Natural killer cell (primary cell): ENCODE measurements at regions of chr20 and their contacts with region 1.

Region 1: GRCh38 chr20:45934586-45935415 is at the start of gene PCIF1:
- DNase-seq: peak; percentile 98 to 100
- ATAC-seq: peak; percentile 77 to 91 (median 84)
- H3K4me3 ChIP-seq: peak within 1 kb of the TSS; percentile 99
- H3K4me3 Mint-ChIP-seq: peak within 1 kb of the TSS; percentile 96
- H3K27ac ChIP-seq: peak within 1 kb of the TSS; percentile 98
- H3K27ac Mint-ChIP-seq: peak within 1 kb of the TSS; percentile 96 to 97
- H3K4me1 ChIP-seq: peaks cover 26% of the 10 kb centered on the region
- H3K4me1 Mint-ChIP-seq: peaks cover 23 to 31% of the 10 kb centered on the region in 2 donors
- H3K27me3 ChIP-seq: no peaks in the 10 kb centered on the region
- H3K27me3 Mint-ChIP-seq: no peaks in the 10 kb centered on the region
- CTCF ChIP-seq: no peak
- total RNA-seq, gene PCIF1: 72.0 to 85.1 (median 73.3) TPM

Region 2: GRCh38 chr20:45812157-45813020 is 122.4 kb before region 1 on chr20 and contains the start of gene UBE2C:
- intact Hi-C with region 1: loop called (anchors 1 kb)
- DNase-seq: peak; percentile 93 to 97
- ATAC-seq: peak; percentile 99 to 100 (median 99)
- H3K4me3 ChIP-seq: peak within 1 kb of the TSS; percentile 51
- H3K4me3 Mint-ChIP-seq: peak within 1 kb of the TSS; percentile 87
- H3K27ac ChIP-seq: no peak within 1 kb of the TSS
- H3K27ac Mint-ChIP-seq: peak within 1 kb of the TSS; percentile 68
- H3K4me1 ChIP-seq: peaks cover 17% of the 10 kb centered on the region
- H3K4me1 Mint-ChIP-seq: peaks cover 16% of the 10 kb centered on the region in 2 donors
- H3K27me3 ChIP-seq: no peaks in the 10 kb centered on the region
- H3K27me3 Mint-ChIP-seq: no peaks in the 10 kb centered on the region
- CTCF ChIP-seq: no peak
- total RNA-seq, gene UBE2C: 0.54 to 3.2 TPM in 2 of 3 donors, not detected in the other

Region 3: DNA sequence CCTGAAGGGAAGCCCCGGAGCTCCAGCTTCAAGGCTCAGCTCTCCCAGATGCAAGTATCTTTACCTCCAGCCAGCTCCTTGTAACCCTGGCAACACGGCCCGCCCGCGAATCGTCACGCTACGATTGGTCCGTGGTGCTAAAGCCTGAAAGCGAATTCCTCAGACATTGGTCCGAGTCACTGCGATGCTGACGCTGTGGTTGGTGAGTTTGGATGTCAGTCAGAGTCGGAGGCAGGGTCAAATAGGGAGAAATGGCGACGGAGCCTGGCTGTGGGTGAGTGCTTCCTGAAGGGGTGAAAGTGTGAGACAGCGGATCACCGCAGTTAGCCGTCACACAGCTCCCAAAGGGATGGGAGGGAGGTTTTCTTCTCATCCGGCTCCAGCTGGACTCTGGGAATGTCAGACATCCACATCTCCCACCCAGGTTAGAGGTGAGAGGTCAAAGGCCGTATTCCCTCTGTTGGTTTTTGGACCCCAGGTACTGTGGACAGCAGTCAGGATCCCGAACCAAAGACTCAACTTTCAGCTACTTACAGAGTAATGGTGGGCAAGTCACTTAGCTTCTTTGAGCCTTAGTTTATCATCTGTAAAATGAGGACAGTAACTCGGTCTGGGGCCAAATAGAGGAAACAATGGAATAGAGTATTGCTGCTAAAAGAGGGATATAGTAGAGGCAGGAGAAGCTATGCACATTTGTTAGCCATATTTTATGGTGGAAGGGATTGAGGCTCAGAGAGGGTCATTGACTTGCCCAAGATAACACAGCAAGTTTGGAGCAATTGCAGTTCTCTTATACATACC is 53.6 kb before region 1 on chr20 and contains the start of gene ZSWIM1:
- intact Hi-C with region 1: loop called (anchors 2 kb)
- DNase-seq: peak; percentile 93 to 100
- ATAC-seq: peak; percentile 98
- H3K4me3 ChIP-seq: peak within 1 kb of the TSS; percentile 45
- H3K4me3 Mint-ChIP-seq: peak within 1 kb of the TSS; percentile 73
- H3K27ac ChIP-seq: peak within 1 kb of the TSS; percentile 49
- H3K27ac Mint-ChIP-seq: peak within 1 kb of the TSS; percentile 84 to 89
- H3K4me1 ChIP-seq: peaks cover 12% of the 10 kb centered on the region
- H3K4me1 Mint-ChIP-seq: peaks cover 18% of the 10 kb centered on the region in 2 donors
- H3K27me3 ChIP-seq: no peaks in the 10 kb centered on the region
- H3K27me3 Mint-ChIP-seq: peaks cover 0 to 4% of the 10 kb centered on the region in 2 donors
- CTCF ChIP-seq: no peak
- total RNA-seq, gene ZSWIM1: 0.59 to 2.4 (median 0.89) TPM

Region 4: DNA sequence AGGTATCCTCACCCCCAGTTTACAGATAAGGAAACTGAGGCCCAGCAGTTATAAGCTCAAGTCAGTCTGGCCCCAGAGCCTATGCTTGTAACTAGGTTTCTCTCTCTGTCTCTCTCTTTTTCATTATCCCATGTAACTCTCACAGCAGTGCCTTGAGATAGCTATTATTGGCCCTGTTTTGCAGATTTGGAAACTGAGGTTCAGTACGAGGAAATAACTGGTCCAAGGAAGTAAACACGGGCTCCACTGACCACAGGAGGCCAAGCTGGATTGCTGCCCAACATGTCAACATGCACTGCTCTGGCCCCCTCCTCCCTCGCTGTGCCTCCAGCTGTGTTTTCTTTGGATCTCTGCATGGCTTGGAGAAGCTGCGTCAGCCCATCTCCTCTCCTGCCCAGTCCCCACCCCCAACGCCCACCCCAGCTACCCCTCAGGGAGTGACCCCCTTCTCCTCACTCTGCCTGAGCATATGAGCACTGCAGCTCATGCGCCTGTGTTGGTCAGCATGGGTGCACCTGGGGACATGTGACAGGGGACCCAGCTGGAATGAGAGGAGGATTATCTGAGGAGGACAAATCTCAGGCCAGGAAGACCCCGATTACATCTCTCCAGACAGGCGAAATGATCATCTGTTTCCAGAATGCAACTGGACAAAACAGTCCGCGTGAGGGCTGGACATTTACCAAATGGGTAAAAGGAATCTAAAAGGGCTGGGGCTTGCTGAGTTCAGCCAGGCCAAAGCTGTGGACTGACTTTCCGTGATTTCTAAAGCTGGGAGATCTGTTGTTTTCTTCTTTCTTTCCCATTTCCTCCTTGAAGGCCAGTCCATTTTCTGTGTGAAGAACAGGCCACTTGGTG is 15.0 kb before region 1 on chr20:
- intact Hi-C with region 1: no loop called
- DNase-seq: no peak
- ATAC-seq: no peak
- H3K4me3 ChIP-seq: no peak overlapping the region
- H3K4me3 Mint-ChIP-seq: no peak overlapping the region
- H3K27ac ChIP-seq: no peak overlapping the region
- H3K27ac Mint-ChIP-seq: no peak overlapping the region
- H3K4me1 ChIP-seq: no peaks in the 10 kb centered on the region
- H3K4me1 Mint-ChIP-seq: peaks cover 0 to 4% of the 10 kb centered on the region in 2 donors
- H3K27me3 ChIP-seq: peaks cover 4% of the 10 kb centered on the region
- H3K27me3 Mint-ChIP-seq: peaks cover 21 to 30% of the 10 kb centered on the region in 2 donors
- CTCF ChIP-seq: no peak

Region 5: GRCh38 chr20:45946149-45946970 is 11.6 kb after region 1 on chr20:
- intact Hi-C with region 1: loop called (anchors 1 kb)
- DNase-seq: peak; percentile 74 to 85
- ATAC-seq: peak; percentile 65 to 78 (median 75)
- H3K4me3 ChIP-seq: no peak overlapping the region
- H3K4me3 Mint-ChIP-seq: peak overlapping the region; percentile 72
- H3K27ac ChIP-seq: peak overlapping the region; percentile 87
- H3K27ac Mint-ChIP-seq: peak overlapping the region; percentile 90 to 97
- H3K4me1 ChIP-seq: peaks cover 47% of the 10 kb centered on the region
- H3K4me1 Mint-ChIP-seq: peaks cover 36 to 62% of the 10 kb centered on the region in 2 donors
- H3K27me3 ChIP-seq: no peaks in the 10 kb centered on the region
- H3K27me3 Mint-ChIP-seq: no peaks in the 10 kb centered on the region
- CTCF ChIP-seq: no peak

Region 6: GRCh38 chr20:45971675-45972499 is 37.1 kb after region 1 on chr20 and contains the start of gene ZNF335:
- intact Hi-C with region 1: loop called (anchors 1 kb)
- DNase-seq: peak; percentile 97 to 98
- ATAC-seq: peak; percentile 81 to 92 (median 81)
- H3K4me3 ChIP-seq: peak within 1 kb of the TSS; percentile 95
- H3K4me3 Mint-ChIP-seq: peak within 1 kb of the TSS; percentile 97
- H3K27ac ChIP-seq: peak within 1 kb of the TSS; percentile 96
- H3K27ac Mint-ChIP-seq: peak within 1 kb of the TSS; percentile 97 to 99
- H3K4me1 ChIP-seq: peaks cover 36% of the 10 kb centered on the region
- H3K4me1 Mint-ChIP-seq: peaks cover 28 to 29% of the 10 kb centered on the region in 2 donors
- H3K27me3 ChIP-seq: no peaks in the 10 kb centered on the region
- H3K27me3 Mint-ChIP-seq: no peaks in the 10 kb centered on the region
- CTCF ChIP-seq: no peak
- total RNA-seq, gene ZNF335: 101 to 119 (median 102) TPM